ENCODE measurements at regions of chr5 and their contacts with region 1.

Region 1: DNA sequence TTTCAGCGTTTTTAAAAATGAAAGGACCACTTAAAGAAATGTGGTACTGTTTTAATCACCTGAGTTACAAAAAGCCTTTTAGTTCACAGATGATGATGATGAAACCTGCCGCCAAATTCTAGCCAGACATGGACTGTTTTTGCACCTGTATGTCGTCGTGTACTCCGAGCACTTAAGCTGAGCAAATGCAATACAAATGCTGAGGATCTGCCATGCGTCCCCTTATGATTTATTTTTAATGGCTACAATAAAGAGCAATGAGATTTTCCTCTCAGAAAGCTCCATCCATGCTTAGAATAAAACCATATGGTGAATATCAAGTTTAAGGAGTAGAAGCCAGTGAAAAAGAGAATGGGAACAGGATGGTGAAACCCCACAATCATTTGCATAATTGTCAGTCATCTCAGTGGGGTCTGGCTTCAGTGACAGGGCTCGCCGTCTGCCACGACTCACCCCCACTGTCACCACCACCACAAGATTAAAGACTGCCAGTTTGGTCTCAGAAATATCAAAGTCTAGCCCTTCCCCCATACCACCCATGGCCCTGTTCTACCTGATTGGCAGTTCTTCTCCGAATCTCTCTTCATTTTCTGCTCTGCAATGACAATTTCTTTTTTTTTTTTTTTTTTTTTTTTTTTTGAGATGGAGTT is 159.9 kb downstream of the GOLPH3 start:
- DNase-seq: no peak
- H3K4me3 ChIP-seq: no peak overlapping the region
- H3K27ac ChIP-seq: peak overlapping the region in 27 of 59 donors; percentile 3 to 63 (median 24)
- H3K27me3 ChIP-seq: no peaks in the 10 kb centered on the region
- CTCF ChIP-seq: no peak

Region 2: DNA sequence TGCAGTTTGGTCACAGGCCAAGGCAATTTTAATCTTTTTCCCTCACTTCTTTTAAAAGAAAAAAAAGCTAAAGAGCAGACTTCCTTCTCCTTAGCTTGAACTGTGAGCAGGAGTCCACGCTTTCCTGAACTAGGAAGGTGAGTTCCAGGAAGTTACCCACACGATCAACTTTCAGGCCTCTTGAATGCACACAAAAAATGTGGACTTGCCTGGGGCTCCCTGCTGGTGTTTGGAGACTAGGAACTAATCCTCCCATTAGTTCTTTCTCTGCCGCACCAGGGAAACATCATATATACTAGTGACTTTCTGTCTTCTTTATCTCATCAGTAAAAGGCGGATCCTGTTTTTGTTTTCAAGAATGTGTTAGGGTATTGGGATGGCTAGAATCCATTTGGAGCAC is 80.1 kb before region 1 on chr5:
- intact Hi-C with region 1: loop called in 1 of 2 experiments (anchors 5 kb)
- DNase-seq: no peak
- H3K4me3 ChIP-seq: no peak overlapping the region
- H3K27ac ChIP-seq: no peak overlapping the region
- H3K27me3 ChIP-seq: no peaks in the 10 kb centered on the region
- CTCF ChIP-seq: no peak

Measured in dorsolateral prefrontal cortex (tissue), 120 donors.